ENCODE measurements at regions of chr7 and their contacts with region 1.

Region 1: DNA sequence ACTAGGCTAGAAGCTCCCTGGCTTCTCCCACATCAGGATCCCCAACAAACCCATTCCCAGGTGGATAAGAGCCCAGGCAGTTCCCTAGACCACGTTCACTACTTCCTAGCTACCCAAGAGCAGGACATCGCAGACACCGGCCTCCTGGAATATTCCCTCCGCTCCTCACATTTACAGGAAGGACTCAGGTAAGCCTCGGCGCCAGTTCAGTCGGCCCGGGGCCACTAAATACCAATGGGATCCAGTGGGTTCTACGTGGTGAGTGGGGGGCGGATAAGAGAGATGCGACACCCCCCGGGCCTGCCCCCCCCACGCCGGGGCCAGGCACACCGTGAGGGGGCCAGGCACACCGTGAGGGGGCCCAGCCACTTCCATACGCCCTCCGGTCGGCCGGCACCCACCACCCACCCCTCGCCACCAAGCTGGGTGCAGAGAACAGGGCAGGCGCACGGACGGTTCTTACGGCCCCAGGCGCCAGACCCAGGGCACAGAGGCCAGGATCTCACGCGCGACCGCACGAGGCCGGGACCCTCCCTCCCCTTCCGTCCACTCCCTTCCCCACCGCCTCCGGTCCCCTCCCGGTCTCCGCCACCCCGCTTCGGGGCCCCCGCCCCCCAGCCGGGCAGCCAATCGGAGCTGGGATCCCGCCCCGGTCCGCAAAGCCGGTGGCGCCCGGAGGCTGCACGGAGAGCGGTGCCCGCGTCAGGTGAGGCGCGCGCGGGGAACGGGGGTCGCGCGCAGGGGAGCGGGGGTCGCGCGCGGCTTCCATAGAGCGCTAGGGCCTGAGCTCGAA is at the start of gene BLVRA:
- DNase-seq: peak; percentile 64 to 74
- H3K4me3 ChIP-seq: peak within 1 kb of the TSS; percentile 52
- H3K4me3 Mint-ChIP-seq: peak within 1 kb of the TSS; percentile 41
- H3K27ac Mint-ChIP-seq: no peak within 1 kb of the TSS
- H3K4me1 ChIP-seq: 0 out of 2 replicates have a peak, but pooled peaks cover 5% of the 10 kb centered on the region
- H3K4me1 Mint-ChIP-seq: peaks cover 6% of the 10 kb centered on the region
- H3K27me3 ChIP-seq: no peaks in the 10 kb centered on the region
- H3K27me3 Mint-ChIP-seq: peaks cover 6% of the 10 kb centered on the region
- CTCF ChIP-seq: no peak
- total RNA-seq, gene BLVRA: 19.1 and 27.9 TPM in 2 replicates

Region 2: GRCh38 chr7:43729214-43729923 is 28.9 kb before region 1 on chr7 and contains the start of gene COA1:
- CTCF ChIA-PET with region 1: no interaction called
- POLR2A ChIA-PET with region 1: interaction called, 6 read pairs
- intact Hi-C with region 1: loop called (anchors 2 kb)
- DNase-seq: peak; percentile 88 to 90
- H3K4me3 ChIP-seq: peak within 1 kb of the TSS; percentile 65
- H3K4me3 Mint-ChIP-seq: peak within 1 kb of the TSS; percentile 70
- H3K27ac Mint-ChIP-seq: peak within 1 kb of the TSS; percentile 82
- H3K4me1 ChIP-seq: peaks cover 11% of the 10 kb centered on the region; the same call in 1 of the 2 replicates
- H3K4me1 Mint-ChIP-seq: no peaks in the 10 kb centered on the region
- H3K27me3 ChIP-seq: no peaks in the 10 kb centered on the region
- H3K27me3 Mint-ChIP-seq: no peaks in the 10 kb centered on the region
- CTCF ChIP-seq: no peak
- total RNA-seq, gene COA1: 93.4 and 94.7 TPM in 2 replicates